Heart left ventricle (tissue), 16 donors: ENCODE measurements at regions of chrX and their contacts with region 1.

Region 1: GRCh38 chrX:119118780-119119395 is 8.7 kb downstream of the KIAA1210 start:
- DNase-seq: peak; percentile 8 to 65 (median 28)
- ATAC-seq: peak in 3 of 4 donors; percentile 67 to 72 (median 67)
- H3K4me3 ChIP-seq: no peak overlapping the region
- H3K27ac ChIP-seq: no peak overlapping the region
- H3K4me1 ChIP-seq: no peaks in the 10 kb centered on the region
- H3K27me3 ChIP-seq: peaks cover 0 to 26% (median 0%) of the 10 kb centered on the region in 9 donors
- CTCF ChIP-seq: peak; percentile 55 to 76 (median 64)
- POLR2A ChIP-seq: no peak

Region 2: DNA sequence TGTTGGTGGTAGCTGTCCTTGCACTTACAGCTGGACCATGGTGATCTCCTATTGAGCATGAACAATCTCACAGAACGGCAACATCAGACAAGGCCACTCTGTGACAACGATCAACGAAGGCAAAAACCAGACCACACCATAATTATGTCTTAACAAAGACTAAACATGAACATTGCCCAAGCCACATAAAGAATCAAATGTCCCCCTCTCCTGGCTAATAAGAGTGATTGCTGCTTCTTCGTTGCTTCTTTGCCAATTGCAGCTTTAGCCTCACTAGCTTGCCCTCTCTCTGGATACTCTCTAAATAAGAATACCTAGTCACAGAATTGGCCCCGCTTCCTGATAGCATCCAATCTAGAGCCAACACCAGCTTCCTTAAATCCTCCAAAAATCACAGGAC is 75.7 kb after region 1 on chrX:
- intact Hi-C with region 1: loop called in 2 of 10 experiments (anchors 5 kb)
- DNase-seq: no peak
- ATAC-seq: no peak
- H3K4me3 ChIP-seq: no peak overlapping the region
- H3K27ac ChIP-seq: no peak overlapping the region
- H3K4me1 ChIP-seq: no peaks in the 10 kb centered on the region
- H3K27me3 ChIP-seq: no peaks in the 10 kb centered on the region
- CTCF ChIP-seq: peak in 6 of 12 donors; percentile 8 to 37 (median 28)
- POLR2A ChIP-seq: no peak

Region 3: GRCh38 chrX:119211649-119212014 is 92.7 kb after region 1 on chrX:
- intact Hi-C with region 1: loop called in 3 of 10 experiments (anchors 5 to 10 kb)
- DNase-seq: peak in 2 of 5 donors; percentile 27 to 45
- ATAC-seq: peak; percentile 90 to 94 (median 92)
- H3K4me3 ChIP-seq: no peak overlapping the region
- H3K27ac ChIP-seq: peak overlapping the region in 6 of 12 donors; percentile 16 to 76 (median 52)
- H3K4me1 ChIP-seq: no peaks in the 10 kb centered on the region
- H3K27me3 ChIP-seq: peaks cover 0 to 16% (median 0%) of the 10 kb centered on the region in 9 donors
- CTCF ChIP-seq: no peak
- POLR2A ChIP-seq: no peak

Region 4: DNA sequence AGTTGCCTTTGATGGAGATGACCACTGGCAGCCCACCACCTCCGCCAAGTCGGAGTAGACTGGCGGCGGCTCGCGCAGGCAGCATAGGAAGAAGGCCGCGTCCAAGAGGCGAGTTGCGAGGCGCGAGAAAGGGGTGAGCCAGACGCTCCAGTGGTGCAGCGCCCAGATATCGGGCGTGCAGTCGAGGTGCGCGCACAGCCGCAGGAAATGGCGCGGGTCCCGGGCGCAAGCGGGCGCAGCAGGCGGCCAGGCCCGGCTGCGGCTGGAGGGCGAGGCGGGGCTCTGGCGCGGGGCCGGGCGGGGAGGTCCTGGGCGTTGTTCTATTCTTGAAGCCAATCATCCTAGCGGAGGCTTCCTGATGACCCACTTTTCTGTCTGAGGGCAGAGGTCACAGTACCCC is 104.0 kb after region 1 on chrX:
- intact Hi-C with region 1: loop called in 3 of 10 experiments (anchors 5 to 10 kb)
- DNase-seq: no peak
- ATAC-seq: no peak
- H3K4me3 ChIP-seq: no peak overlapping the region
- H3K27ac ChIP-seq: no peak overlapping the region
- H3K4me1 ChIP-seq: no peaks in the 10 kb centered on the region
- H3K27me3 ChIP-seq: peaks cover 0 to 30% (median 0%) of the 10 kb centered on the region in 9 donors
- CTCF ChIP-seq: no peak
- POLR2A ChIP-seq: no peak

Region 5: GRCh38 chrX:119266364-119266995 is 147.6 kb after region 1 on chrX:
- intact Hi-C with region 1: loop called in 3 of 10 experiments (anchors 5 kb)
- DNase-seq: no peak
- ATAC-seq: peak in 1 of 4 donors; percentile 54
- H3K4me3 ChIP-seq: no peak overlapping the region
- H3K27ac ChIP-seq: no peak overlapping the region
- H3K4me1 ChIP-seq: no peaks in the 10 kb centered on the region
- H3K27me3 ChIP-seq: peaks cover 0 to 27% (median 0%) of the 10 kb centered on the region in 9 donors
- CTCF ChIP-seq: peak; percentile 39 to 64 (median 54)
- POLR2A ChIP-seq: no peak

Region 6: GRCh38 chrX:119273420-119274192 is 154.7 kb after region 1 on chrX:
- intact Hi-C with region 1: loop called in 3 of 10 experiments (anchors 5 kb)
- DNase-seq: peak; percentile 11 to 68 (median 60)
- ATAC-seq: peak in 3 of 4 donors; percentile 58 to 85 (median 78)
- H3K4me3 ChIP-seq: peak overlapping the region in 7 of 12 donors; percentile 8 to 31 (median 22)
- H3K27ac ChIP-seq: no peak overlapping the region
- H3K4me1 ChIP-seq: no peaks in the 10 kb centered on the region
- H3K27me3 ChIP-seq: peaks cover 0 to 37% (median 4%) of the 10 kb centered on the region in 9 donors
- CTCF ChIP-seq: peak in 4 of 12 donors; percentile 11 to 36 (median 15)
- POLR2A ChIP-seq: no peak